ENCODE measurements at regions of chr5 and their contacts with region 1.

Region 1: GRCh38 chr5:148760945-148761638 is 65.3 kb upstream of the ADRB2 start:
- DNase-seq: no peak
- H3K4me3 ChIP-seq: no peak overlapping the region
- H3K27ac ChIP-seq: no peak overlapping the region
- H3K4me1 ChIP-seq: peaks cover 0 to 19% (median 3%) of the 10 kb centered on the region in 4 experiments
- H3K27me3 ChIP-seq: no peaks in the 10 kb centered on the region

Region 2: DNA sequence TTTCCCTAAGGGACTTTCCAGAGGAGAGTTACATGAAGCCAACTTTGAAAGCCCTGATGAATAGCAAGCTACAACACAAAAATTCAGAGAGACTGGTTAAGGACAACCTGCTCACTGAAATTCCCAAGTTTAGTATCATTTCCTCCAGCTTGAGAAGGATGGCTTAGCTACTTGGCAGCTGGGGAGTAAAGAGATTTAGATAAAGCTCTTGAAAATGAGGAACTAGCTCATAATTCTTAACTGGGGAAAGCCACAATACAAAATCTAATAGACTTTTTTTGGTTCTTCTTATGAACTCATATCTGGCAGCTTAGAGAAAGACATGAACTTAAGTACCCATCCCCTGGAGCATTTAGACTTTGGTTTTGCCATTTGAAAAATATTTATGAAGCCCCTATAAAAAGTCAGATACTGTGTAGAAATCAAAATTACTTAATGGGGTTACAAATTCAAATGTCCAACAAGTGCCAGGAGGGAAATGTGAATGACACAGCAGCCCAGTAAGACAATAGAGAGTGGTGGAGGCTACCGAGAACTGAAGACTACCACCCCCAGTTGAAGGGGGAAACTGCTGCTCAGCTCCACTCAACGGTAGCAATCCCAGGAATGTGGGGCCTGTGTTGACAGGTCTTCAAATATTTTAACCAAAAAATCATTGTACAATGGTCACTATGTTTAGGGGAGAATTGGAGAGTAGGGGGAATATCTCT is 14.1 kb before region 1 on chr5:
- CTCF ChIA-PET with region 1: interaction called, 5 read pairs
- POLR2A ChIA-PET with region 1: interaction called, 11 read pairs
- DNase-seq: peak; percentile 76 to 95 (median 91)
- H3K4me3 ChIP-seq: peak overlapping the region in 3 of 7 experiments; percentile 22 to 44 (median 39)
- H3K27ac ChIP-seq: no peak overlapping the region
- H3K4me1 ChIP-seq: peaks cover 33 to 51% (median 40%) of the 10 kb centered on the region in 4 experiments
- H3K27me3 ChIP-seq: no peaks in the 10 kb centered on the region

Region 3: GRCh38 chr5:148791334-148791667 is 30.2 kb after region 1 on chr5:
- CTCF ChIA-PET with region 1: no interaction called
- POLR2A ChIA-PET with region 1: no interaction called
- DNase-seq: peak in 2 of 3 donors; percentile 23 to 40
- H3K4me3 ChIP-seq: no peak overlapping the region
- H3K27ac ChIP-seq: no peak overlapping the region
- H3K4me1 ChIP-seq: peaks cover 4 to 40% (median 9%) of the 10 kb centered on the region in 4 experiments
- H3K27me3 ChIP-seq: no peaks in the 10 kb centered on the region

Region 4: DNA sequence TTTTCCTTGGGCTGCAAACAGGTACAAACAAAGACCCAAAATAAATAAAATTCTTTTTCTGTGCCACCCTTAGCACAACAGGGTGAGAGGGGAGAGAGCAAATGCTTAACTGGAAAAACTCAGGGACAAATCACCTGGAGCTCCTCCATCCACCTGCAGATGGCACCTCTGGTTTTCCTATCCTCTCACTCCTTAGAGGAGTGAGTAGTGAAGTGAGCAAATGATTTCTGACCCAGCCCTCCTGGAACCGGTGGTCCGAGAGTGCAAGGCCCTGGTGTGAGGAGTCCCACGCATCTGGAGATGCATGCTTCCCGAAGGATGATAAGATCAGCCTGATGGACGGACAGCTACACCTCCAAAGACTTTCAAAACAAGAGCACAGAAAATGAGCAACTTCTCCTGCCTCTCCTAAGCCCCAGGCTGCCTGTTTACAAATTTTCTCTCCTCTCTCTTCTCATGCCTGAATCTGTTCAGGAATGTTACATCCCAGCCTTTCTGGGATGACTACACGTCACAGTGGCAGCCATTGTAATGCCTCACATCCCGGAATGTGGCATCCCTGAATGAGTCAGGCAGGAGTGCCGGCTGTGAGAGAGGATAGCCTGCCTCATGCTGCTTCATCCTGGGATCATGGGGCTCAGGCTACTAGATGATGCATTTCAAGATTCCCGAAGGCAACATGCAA is 151.8 kb after region 1 on chr5:
- CTCF ChIA-PET with region 1: no interaction called
- POLR2A ChIA-PET with region 1: no interaction called
- DNase-seq: no peak
- H3K4me3 ChIP-seq: no peak overlapping the region
- H3K27ac ChIP-seq: no peak overlapping the region
- H3K4me1 ChIP-seq: peaks cover 0 to 12% (median 9%) of the 10 kb centered on the region in 4 experiments
- H3K27me3 ChIP-seq: no peaks in the 10 kb centered on the region